ENCODE measurements at regions of chr9 and their contacts with region 1.

Region 1: GRCh38 chr9:114155263-114155972 is at the start of gene COL27A1:
- DNase-seq: peak; percentile 91
- H3K4me3 ChIP-seq: peak within 1 kb of the TSS; percentile 37 to 73 (median 60)
- H3K27ac ChIP-seq: peak within 1 kb of the TSS; percentile 62 to 84 (median 74)
- H3K4me1 ChIP-seq: peaks cover 0 to 48% (median 38%) of the 10 kb centered on the region in 4 donors
- H3K27me3 ChIP-seq: peaks cover 24 to 46% (median 34%) of the 10 kb centered on the region in 3 donors
- CTCF ChIP-seq: peak; percentile 82 to 98 (median 93)
- EP300 ChIP-seq: no peak
- POLR2A ChIP-seq: no peak
- total RNA-seq, gene COL27A1: 2.0 to 13.3 (median 7.1) TPM

Region 2: GRCh38 chr9:114108016-114108833 is 47.2 kb before region 1 on chr9:
- intact Hi-C with region 1: loop called (anchors 10 kb)
- DNase-seq: peak; percentile 86
- H3K4me3 ChIP-seq: no peak overlapping the region
- H3K27ac ChIP-seq: no peak overlapping the region
- H3K4me1 ChIP-seq: peaks cover 0 to 7% (median 3%) of the 10 kb centered on the region in 4 donors
- H3K27me3 ChIP-seq: no peaks in the 10 kb centered on the region
- CTCF ChIP-seq: peak; percentile 73 to 91 (median 80)
- EP300 ChIP-seq: no peak
- POLR2A ChIP-seq: no peak

Region 3: DNA sequence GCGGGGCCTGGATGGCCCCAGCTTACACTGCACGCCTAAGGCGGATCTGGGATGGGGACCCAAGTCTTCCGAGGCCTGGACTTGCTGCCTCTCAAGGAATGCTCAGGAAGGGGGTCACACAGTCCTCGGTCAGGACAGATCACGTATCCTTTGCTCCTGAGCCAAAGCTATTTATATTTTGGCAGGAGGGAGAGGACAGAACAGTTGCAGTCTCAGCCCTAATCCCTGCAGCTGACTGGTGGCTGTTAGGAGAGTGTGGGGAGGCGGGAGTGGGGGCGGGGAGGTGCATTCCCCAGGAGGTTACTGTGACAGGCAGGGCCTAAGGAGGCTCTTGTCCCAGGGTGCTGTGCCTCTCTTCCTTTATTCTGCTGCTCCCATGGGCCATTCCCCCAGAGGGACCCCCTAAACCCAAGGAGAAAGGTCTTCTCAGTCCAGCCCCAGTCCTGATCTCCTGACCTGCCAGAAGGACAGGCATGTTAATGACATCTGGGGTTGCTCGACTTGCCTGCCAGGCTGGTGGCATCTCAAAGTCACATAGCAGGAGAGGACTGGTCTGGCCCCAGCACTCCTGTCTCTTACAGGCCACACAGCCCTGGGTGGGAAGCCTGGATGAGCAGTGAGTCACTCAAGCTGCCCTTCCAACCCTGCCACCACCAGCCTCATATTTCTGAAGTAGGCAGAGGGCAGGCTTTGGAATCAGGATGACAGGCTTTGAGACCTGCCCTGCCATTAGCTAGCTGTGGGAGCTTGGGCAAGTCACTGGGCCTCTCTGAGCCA is 51.8 kb after region 1 on chr9:
- intact Hi-C with region 1: loop called (anchors 5 kb)
- DNase-seq: peak; percentile 79
- H3K4me3 ChIP-seq: no peak overlapping the region
- H3K27ac ChIP-seq: peak overlapping the region in 1 of 4 donors; percentile 18
- H3K4me1 ChIP-seq: peaks cover 0 to 31% (median 21%) of the 10 kb centered on the region in 4 donors
- H3K27me3 ChIP-seq: no peaks in the 10 kb centered on the region
- CTCF ChIP-seq: no peak
- EP300 ChIP-seq: no peak
- POLR2A ChIP-seq: no peak

Region 4: GRCh38 chr9:114250235-114250568 is 94.8 kb after region 1 on chr9:
- intact Hi-C with region 1: loop called (anchors 1 kb)
- DNase-seq: peak; percentile 93
- H3K4me3 ChIP-seq: peak overlapping the region in 3 of 4 donors; percentile 15 to 24 (median 18)
- H3K27ac ChIP-seq: peak overlapping the region; percentile 65 to 79 (median 74)
- H3K4me1 ChIP-seq: peaks cover 0 to 35% (median 32%) of the 10 kb centered on the region in 4 donors
- H3K27me3 ChIP-seq: no peaks in the 10 kb centered on the region
- CTCF ChIP-seq: no peak
- EP300 ChIP-seq: no peak
- POLR2A ChIP-seq: no peak

Region 5: GRCh38 chr9:114271641-114272081 is 116.2 kb after region 1 on chr9:
- intact Hi-C with region 1: loop called (anchors 1 kb)
- DNase-seq: peak; percentile 75
- H3K4me3 ChIP-seq: no peak overlapping the region
- H3K27ac ChIP-seq: no peak overlapping the region
- H3K4me1 ChIP-seq: no peaks in the 10 kb centered on the region
- H3K27me3 ChIP-seq: no peaks in the 10 kb centered on the region
- CTCF ChIP-seq: peak; percentile 16 to 64 (median 54)
- EP300 ChIP-seq: no peak
- POLR2A ChIP-seq: no peak

Region 6: DNA sequence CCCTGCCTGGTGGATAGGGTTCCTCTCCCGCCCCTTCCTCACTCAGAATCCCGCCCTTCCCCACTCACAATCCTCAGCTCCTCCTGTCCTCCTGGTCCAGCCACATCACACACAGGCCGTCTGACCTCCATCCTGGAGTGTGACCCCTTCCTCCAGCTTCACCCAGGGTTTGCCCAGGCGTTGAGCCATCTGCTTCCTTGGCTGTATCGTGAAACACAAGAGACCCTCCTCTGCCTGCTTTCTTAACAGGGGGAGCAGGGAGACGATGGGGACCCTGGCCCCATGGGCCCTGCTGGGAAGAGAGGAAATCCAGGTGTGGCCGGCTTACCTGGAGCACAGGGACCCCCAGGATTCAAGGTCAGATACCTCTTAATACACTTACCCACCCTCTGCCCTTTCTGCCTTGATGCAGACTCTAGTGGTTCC is 135.2 kb after region 1 on chr9:
- intact Hi-C with region 1: loop called (anchors 1 kb)
- DNase-seq: peak; percentile 40
- H3K4me3 ChIP-seq: no peak overlapping the region
- H3K27ac ChIP-seq: no peak overlapping the region
- H3K4me1 ChIP-seq: peaks cover 0 to 12% (median 3%) of the 10 kb centered on the region in 4 donors
- H3K27me3 ChIP-seq: no peaks in the 10 kb centered on the region
- CTCF ChIP-seq: no peak
- EP300 ChIP-seq: no peak
- POLR2A ChIP-seq: no peak